ENCODE measurements at regions of chr5 and their contacts with region 1.

Region 1: GRCh38 chr5:71475788-71476384 is 20.4 kb downstream of the BDP1 start:
- DNase-seq: no peak
- ATAC-seq: peak; percentile 65
- H3K4me3 Mint-ChIP-seq: no peak overlapping the region
- H3K27ac Mint-ChIP-seq: no peak overlapping the region
- H3K4me1 Mint-ChIP-seq: no peaks in the 10 kb centered on the region
- H3K27me3 Mint-ChIP-seq: no peaks in the 10 kb centered on the region
- CTCF ChIP-seq: peak; percentile 58

Region 2: GRCh38 chr5:71461360-71461759 is 14.5 kb before region 1 on chr5:
- CTCF ChIA-PET with region 1: interaction called, 21 read pairs
- POLR2A ChIA-PET with region 1: interaction called, 4 read pairs
- intact Hi-C with region 1: no loop called
- DNase-seq: no peak
- ATAC-seq: no peak
- H3K4me3 Mint-ChIP-seq: no peak overlapping the region
- H3K27ac Mint-ChIP-seq: no peak overlapping the region
- H3K4me1 Mint-ChIP-seq: peaks cover 12% of the 10 kb centered on the region
- H3K27me3 Mint-ChIP-seq: no peaks in the 10 kb centered on the region
- CTCF ChIP-seq: no peak

Region 3: DNA sequence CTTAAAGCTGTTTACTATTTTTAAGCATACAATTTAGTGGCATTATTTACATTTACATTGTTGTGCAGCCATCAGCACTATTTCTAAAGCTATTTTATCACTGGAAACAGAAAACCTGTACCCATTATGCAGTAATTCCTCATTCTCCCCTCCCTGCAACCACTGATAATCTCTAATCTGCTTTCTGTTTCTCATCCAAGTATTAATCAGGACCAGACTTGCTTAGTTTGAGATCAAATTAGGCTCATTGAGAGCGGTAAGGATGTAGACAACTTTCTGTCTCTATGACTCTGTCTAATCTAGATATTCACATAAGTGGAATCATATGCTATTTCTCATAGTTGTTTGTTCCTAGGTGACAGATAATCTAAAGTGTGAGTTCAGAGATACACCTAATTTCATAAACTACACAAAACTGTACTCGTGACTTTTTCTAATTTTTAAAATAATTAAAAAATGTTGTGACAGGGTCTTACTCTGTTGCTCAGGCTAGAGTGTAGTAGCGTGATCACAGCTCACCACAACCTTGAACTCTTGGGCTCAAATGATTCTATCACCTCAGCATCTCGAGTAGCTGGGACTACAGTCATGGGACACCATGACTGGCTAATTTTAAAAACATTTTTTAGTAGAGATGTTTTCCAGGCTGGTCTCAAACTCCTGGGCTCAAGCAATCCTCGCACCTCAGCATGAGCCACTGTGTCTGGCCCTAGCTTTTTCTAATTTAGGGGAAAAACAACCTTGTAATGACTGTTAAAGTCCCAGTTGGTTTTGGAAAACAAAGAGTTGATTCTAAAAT is 17.1 kb after region 1 on chr5:
- CTCF ChIA-PET with region 1: interaction called, 16 read pairs
- POLR2A ChIA-PET with region 1: no interaction called
- intact Hi-C with region 1: no loop called
- DNase-seq: no peak
- ATAC-seq: no peak
- H3K4me3 Mint-ChIP-seq: no peak overlapping the region
- H3K27ac Mint-ChIP-seq: no peak overlapping the region
- H3K4me1 Mint-ChIP-seq: no peaks in the 10 kb centered on the region
- H3K27me3 Mint-ChIP-seq: no peaks in the 10 kb centered on the region
- CTCF ChIP-seq: no peak

Region 4: GRCh38 chr5:71586941-71587765 is 111.3 kb after region 1 on chr5 and contains the start of gene MCCC2:
- CTCF ChIA-PET with region 1: no interaction called
- POLR2A ChIA-PET with region 1: no interaction called
- intact Hi-C with region 1: no loop called
- DNase-seq: peak; percentile 99
- ATAC-seq: peak; percentile 99
- H3K4me3 Mint-ChIP-seq: peak within 1 kb of the TSS; percentile 80
- H3K27ac Mint-ChIP-seq: peak within 1 kb of the TSS; percentile 98
- H3K4me1 Mint-ChIP-seq: peaks cover 34% of the 10 kb centered on the region
- H3K27me3 Mint-ChIP-seq: no peaks in the 10 kb centered on the region
- CTCF ChIP-seq: no peak
- total RNA-seq, gene MCCC2: 60.0 to 60.4 TPM

Region 5: GRCh38 chr5:71757590-71758543 is 282.0 kb after region 1 on chr5:
- CTCF ChIA-PET with region 1: interaction called, 10 read pairs
- POLR2A ChIA-PET with region 1: no interaction called
- intact Hi-C with region 1: no loop called
- DNase-seq: peak; percentile 69
- ATAC-seq: peak; percentile 96
- H3K4me3 Mint-ChIP-seq: no peak overlapping the region
- H3K27ac Mint-ChIP-seq: peak overlapping the region; percentile 32
- H3K4me1 Mint-ChIP-seq: peaks cover 5% of the 10 kb centered on the region
- H3K27me3 Mint-ChIP-seq: peaks cover 4% of the 10 kb centered on the region
- CTCF ChIP-seq: peak; percentile 64

Measured in activated CD8-positive, alpha-beta T cell treated with anti-CD3 and anti-CD28 coated beads for 36 hours (primary cell).